CD8-positive, alpha-beta memory T cell (primary cell): ENCODE measurements at regions of chr9 and their contacts with region 1.

Region 1: GRCh38 chr9:70258692-70259511 is at the start of gene SMC5:
- DNase-seq: peak; percentile 83 to 93 (median 91)
- H3K4me3 ChIP-seq: peak within 1 kb of the TSS; percentile 95
- H3K4me3 Mint-ChIP-seq: peak within 1 kb of the TSS; percentile 87 to 98 (median 95)
- H3K27ac ChIP-seq: peak within 1 kb of the TSS; percentile 92
- H3K27ac Mint-ChIP-seq: peak within 1 kb of the TSS; percentile 89 to 100 (median 98)
- H3K4me1 ChIP-seq: peaks cover 52% of the 10 kb centered on the region
- H3K4me1 Mint-ChIP-seq: peaks cover 48 to 59% (median 54%) of the 10 kb centered on the region in 3 donors
- H3K27me3 ChIP-seq: no peaks in the 10 kb centered on the region
- H3K27me3 Mint-ChIP-seq: peaks cover 0 to 2% of the 10 kb centered on the region in 2 donors
- total RNA-seq, gene SMC5: 42.2 TPM

Region 2: DNA sequence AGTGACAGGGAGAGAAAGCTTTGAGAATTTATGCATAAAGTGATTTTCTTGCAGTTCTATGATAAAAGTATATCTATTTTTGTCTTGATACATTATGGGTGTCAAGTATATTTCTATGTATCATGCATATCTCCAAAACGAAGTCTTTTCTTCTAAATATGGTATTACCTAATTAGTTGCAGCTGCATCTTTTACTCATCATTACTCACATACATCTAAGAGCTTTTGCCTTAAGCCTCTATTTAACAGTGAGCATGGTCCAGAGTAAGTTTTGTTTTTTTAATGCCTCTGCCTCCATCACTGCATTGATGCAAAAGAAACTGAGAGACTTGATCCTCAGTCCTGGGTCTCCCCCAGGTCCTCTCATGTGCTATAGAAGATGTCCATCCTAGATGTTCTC is 40.1 kb before region 1 on chr9:
- CTCF ChIA-PET with region 1: no interaction called
- POLR2A ChIA-PET with region 1: no interaction called
- DNase-seq: no peak
- H3K4me3 ChIP-seq: no peak overlapping the region
- H3K4me3 Mint-ChIP-seq: no peak overlapping the region
- H3K27ac ChIP-seq: no peak overlapping the region
- H3K27ac Mint-ChIP-seq: no peak overlapping the region
- H3K4me1 ChIP-seq: no peaks in the 10 kb centered on the region
- H3K4me1 Mint-ChIP-seq: no peaks in the 10 kb centered on the region
- H3K27me3 ChIP-seq: no peaks in the 10 kb centered on the region
- H3K27me3 Mint-ChIP-seq: peaks cover 0 to 2% of the 10 kb centered on the region in 2 donors

Region 3: DNA sequence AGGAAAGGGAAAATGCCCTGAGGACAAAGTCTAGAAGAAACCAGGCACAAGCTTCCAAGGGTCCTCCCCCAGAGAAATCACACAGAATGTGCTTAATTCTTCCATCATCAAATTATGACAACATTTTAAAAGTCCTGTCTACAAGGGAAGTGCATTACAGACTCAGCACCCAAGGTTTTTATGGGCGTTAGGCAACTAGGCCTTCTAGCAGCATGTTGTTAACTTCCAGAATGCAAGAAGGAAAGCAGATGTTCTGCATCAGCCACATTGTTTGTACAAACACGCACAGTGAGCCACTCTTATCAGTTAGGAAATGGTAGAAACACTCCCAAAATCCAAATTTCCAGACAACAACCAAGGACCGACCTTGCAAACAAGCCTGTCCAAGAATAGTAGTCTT is 26.3 kb after region 1 on chr9:
- CTCF ChIA-PET with region 1: no interaction called
- POLR2A ChIA-PET with region 1: no interaction called
- DNase-seq: no peak
- H3K4me3 ChIP-seq: no peak overlapping the region
- H3K4me3 Mint-ChIP-seq: no peak overlapping the region
- H3K27ac ChIP-seq: no peak overlapping the region
- H3K27ac Mint-ChIP-seq: peak overlapping the region in 1 of 8 donors; percentile 29
- H3K4me1 ChIP-seq: no peaks in the 10 kb centered on the region
- H3K4me1 Mint-ChIP-seq: peaks cover 4 to 35% (median 29%) of the 10 kb centered on the region in 3 donors
- H3K27me3 ChIP-seq: no peaks in the 10 kb centered on the region
- H3K27me3 Mint-ChIP-seq: no peaks in the 10 kb centered on the region

Region 4: DNA sequence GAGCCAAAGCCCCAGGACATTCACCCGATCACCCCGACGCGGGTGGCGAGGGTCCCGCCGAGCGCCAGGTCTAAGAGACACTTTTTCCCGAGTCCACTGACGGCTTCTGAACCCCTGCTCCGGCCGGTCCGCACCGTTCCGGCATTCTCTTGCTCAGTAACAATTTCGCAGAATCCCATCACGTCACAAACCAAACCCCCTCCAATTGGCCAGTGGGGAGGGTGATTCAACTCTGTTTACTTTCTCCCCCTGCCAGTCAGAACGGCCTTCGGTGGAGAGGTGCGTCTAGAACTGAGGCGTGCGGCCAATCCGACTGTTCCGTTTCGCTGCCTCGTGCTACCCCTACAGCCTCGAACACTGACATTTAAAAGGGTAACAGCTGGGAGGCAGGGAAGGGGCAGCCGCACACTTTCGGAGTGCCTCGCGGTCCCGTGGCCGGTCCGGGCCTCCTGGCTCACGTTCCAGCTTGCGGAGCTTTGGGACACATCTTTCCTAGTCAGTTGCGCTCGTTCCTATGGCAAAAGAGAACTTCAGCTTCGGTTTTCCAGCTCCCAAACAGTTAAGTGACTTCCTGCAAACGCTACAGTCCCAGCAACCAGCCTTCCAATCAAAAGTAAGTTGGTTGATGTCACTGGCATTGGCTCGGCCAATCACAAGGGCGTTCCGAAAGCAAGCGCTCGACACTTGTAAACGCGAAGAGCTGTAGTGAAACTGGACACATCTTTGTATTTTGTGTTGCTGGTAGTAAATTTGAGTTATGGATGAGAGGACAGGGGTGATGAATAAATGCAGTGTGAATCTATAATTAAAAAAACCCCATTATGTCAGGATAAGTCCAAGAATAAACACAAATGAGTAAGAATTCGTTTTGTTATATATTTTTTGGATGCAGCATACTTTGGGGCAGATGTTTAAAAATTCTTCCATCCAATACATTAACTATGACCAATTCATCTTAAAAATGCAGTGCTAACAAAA is 155.2 kb after region 1 on chr9 and contains the start of gene KLF9:
- CTCF ChIA-PET with region 1: no interaction called
- POLR2A ChIA-PET with region 1: interaction called, 10 read pairs
- DNase-seq: peak; percentile 83 to 97 (median 95)
- H3K4me3 ChIP-seq: peak within 1 kb of the TSS; percentile 49
- H3K4me3 Mint-ChIP-seq: peak within 1 kb of the TSS; percentile 95 to 99 (median 98)
- H3K27ac ChIP-seq: peak within 1 kb of the TSS; percentile 98
- H3K27ac Mint-ChIP-seq: peak within 1 kb of the TSS; percentile 100
- H3K4me1 ChIP-seq: peaks cover 43% of the 10 kb centered on the region
- H3K4me1 Mint-ChIP-seq: peaks cover 43 to 59% (median 53%) of the 10 kb centered on the region in 3 donors
- H3K27me3 ChIP-seq: no peaks in the 10 kb centered on the region
- H3K27me3 Mint-ChIP-seq: peaks cover 0 to 2% of the 10 kb centered on the region in 2 donors
- total RNA-seq, gene KLF9: 19.2 to 20.2 TPM